ENCODE measurements at regions of chr12 and their contacts with region 1.

Region 1: DNA sequence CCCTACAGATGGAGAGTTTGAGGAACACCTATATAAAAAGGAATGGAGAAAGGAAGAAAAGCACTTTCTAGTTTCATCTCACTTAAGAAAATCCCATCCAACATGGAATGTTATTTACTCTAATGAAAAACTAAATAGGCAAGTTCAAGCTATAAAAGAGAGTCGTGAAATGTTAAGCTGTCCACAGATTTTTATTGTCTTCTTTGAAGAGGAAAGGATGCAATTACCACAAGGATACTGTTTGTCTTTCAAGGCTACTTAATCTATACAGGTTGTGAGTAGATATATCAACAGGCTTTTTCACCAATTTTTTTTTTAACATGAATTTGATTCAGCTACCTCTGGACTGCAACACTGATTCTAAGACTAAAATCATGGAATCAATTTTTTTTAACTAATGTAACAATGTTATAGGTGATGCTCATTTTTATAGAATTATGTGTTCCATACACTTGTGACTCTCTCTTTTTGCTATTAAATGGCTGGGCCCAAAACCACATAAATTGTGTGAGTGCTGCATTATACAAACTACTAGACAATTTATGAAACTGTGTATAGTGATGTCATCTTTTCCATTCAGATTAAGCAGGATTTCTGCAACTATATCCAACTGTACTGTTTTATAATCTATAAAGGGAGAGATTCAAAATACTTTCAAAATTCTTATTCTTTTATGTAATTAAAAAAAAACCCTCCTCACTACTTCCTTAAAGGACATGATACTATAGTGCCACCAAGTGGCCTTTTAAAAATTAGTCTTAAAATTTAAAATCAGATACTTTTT is 26.8 kb upstream of the BMAL2 start:
- DNase-seq: no peak
- H3K4me3 ChIP-seq: no peak overlapping the region
- H3K27ac ChIP-seq: peak overlapping the region; percentile 46 to 49
- H3K4me1 ChIP-seq: peaks cover 3 to 14% of the 10 kb centered on the region in 2 donors
- H3K27me3 ChIP-seq: no peaks in the 10 kb centered on the region
- CTCF ChIP-seq: peak; percentile 41 to 53 (median 49)

Region 2: GRCh38 chr12:26937875-26938700 is 367.8 kb before region 1 on chr12 and contains the starts of genes FGFR1OP2 and INTS13:
- intact Hi-C with region 1: loop called (anchors 5 kb)
- DNase-seq: peak; percentile 97 to 99
- H3K4me3 ChIP-seq: peak within 1 kb of the TSS; percentile 84 to 96
- H3K27ac ChIP-seq: peak within 1 kb of the TSS; percentile 88 to 99
- H3K4me1 ChIP-seq: peaks cover 4 to 37% of the 10 kb centered on the region in 2 donors
- H3K27me3 ChIP-seq: no peaks in the 10 kb centered on the region
- CTCF ChIP-seq: no peak
- total RNA-seq, gene FGFR1OP2: 34.3 TPM
- total RNA-seq, gene INTS13: 47.5 TPM

Region 3: DNA sequence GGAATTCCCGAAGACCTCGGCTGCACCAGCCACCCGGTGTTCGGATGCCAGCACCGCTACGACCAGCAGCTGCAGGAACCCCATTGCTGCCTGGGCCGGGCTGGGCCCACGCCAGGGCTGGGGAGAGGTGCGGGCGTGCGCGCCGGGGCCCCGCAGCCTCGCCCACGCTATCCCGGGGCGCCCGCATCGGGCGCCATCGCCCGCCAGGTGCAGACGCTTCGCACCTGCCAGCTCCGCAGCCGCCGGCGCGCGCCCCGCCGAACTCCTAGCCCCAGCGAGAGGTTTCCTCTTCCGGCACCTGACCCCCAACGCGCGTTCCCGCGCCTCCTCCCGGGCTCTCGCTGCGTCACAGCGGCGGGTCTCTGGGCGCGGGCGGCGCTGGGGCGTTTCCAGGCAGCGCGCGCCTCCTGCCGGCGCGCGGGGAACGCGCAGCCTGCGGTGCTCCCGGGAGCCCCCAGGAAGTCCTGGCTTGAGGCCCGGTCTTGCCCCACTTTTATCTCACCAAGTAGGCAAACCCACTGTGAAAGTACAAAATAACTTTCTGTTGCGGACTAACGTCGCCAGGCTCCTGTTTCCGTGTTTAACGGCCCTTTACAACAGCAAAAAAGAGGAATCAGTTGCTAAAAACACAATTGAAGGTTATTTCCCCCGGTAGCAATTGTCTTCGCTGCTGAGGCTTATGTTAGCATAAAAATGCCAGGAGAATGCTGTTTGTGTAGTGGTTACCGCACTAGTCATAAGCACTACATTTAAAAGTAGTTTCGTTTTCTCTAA is 291.6 kb before region 1 on chr12 and contains the start of gene TM7SF3:
- intact Hi-C with region 1: loop called (anchors 2 kb)
- DNase-seq: peak; percentile 82 to 96
- H3K4me3 ChIP-seq: peak within 1 kb of the TSS; percentile 97 to 99
- H3K27ac ChIP-seq: peak within 1 kb of the TSS; percentile 88 to 92
- H3K4me1 ChIP-seq: peaks cover 3 to 34% of the 10 kb centered on the region in 2 donors
- H3K27me3 ChIP-seq: no peaks in the 10 kb centered on the region
- CTCF ChIP-seq: peak; percentile 71 to 97 (median 94)
- total RNA-seq, gene TM7SF3: 213 TPM

Region 4: DNA sequence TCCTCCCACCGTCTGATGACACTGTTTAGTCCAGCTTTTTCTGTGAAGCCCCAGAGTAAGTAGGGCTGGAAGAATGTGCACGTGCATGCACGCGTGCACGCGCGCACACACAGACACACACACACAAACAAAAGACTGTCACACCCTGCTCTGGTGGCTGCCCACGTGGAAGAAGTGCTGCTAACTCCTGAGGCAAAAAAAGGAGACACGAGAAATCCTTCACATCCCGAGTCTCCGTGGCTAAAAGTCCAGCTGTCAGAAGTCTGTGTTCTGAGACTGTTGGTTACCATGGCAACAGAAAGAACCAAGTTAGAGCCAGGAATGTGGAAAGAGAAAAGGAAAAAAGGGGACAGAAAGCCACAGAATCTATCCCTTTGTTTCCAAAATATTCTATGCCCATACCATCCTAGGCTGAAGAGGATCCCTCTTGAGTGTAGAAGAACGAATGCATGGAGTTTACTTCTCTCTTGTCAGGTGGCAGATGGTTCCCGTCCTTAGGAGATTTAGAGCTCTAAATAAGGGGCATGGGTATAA is 221.9 kb before region 1 on chr12:
- intact Hi-C with region 1: no loop called
- DNase-seq: no peak
- H3K4me3 ChIP-seq: no peak overlapping the region
- H3K27ac ChIP-seq: no peak overlapping the region
- H3K4me1 ChIP-seq: peaks cover 2 to 6% of the 10 kb centered on the region in 2 donors
- H3K27me3 ChIP-seq: no peaks in the 10 kb centered on the region
- CTCF ChIP-seq: no peak

Region 5: GRCh38 chr12:27142101-27142721 is 163.7 kb before region 1 on chr12:
- intact Hi-C with region 1: loop called (anchors 5 kb)
- DNase-seq: peak in 1 of 2 donors; percentile 85
- H3K4me3 ChIP-seq: no peak overlapping the region
- H3K27ac ChIP-seq: no peak overlapping the region
- H3K4me1 ChIP-seq: peaks cover 0 to 15% of the 10 kb centered on the region in 2 donors
- H3K27me3 ChIP-seq: no peaks in the 10 kb centered on the region
- CTCF ChIP-seq: peak; percentile 63 to 83 (median 77)

Measured in ascending aorta (tissue), 2 donors.